ENCODE measurements at regions of chr1 and their contacts with region 1.

Region 1: DNA sequence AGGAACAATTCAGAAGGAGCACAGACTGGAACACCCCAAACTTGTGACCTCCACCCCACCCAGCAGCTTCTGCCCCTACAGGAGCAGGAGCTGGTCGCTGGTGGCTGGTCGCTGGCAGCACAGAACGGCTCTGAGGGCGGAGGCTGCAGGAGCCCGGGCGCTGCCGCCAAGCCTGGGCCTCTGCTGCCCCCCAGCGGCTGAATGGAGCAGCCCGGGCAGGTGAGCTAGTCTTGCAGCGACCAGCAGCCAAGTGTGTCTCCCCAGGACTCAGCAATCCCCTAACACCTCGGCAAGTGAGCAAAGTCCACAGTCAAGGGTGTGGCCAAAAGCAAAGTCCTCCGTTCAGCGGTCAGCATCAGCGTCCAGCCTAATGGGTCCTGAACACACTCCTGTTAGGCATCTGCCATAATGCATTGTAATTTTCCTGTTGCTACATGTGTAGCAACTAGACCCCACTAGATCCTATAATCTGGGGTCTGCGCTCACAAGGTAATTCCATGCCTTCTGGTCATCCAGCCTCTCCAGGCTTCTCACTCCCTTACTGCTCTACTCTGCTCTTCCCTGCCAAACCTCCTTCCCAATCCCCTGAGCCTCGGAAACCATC is 12.1 kb upstream of the GJB5 start:
- DNase-seq: peak; percentile 91
- ATAC-seq: peak; percentile 98
- H3K4me3 Mint-ChIP-seq: no peak overlapping the region
- H3K27ac Mint-ChIP-seq: no peak overlapping the region
- H3K4me1 Mint-ChIP-seq: no peaks in the 10 kb centered on the region
- H3K27me3 Mint-ChIP-seq: no peaks in the 10 kb centered on the region

Region 2: GRCh38 chr1:34549199-34549598 is 193.6 kb before region 1 on chr1:
- CTCF ChIA-PET with region 1: interaction called, 4 read pairs
- POLR2A ChIA-PET with region 1: no interaction called
- intact Hi-C with region 1: loop called in 1 of 2 experiments (anchors 5 kb)
- DNase-seq: peak; percentile 32
- ATAC-seq: no peak
- H3K4me3 Mint-ChIP-seq: no peak overlapping the region
- H3K27ac Mint-ChIP-seq: no peak overlapping the region
- H3K4me1 Mint-ChIP-seq: no peaks in the 10 kb centered on the region
- H3K27me3 Mint-ChIP-seq: peaks cover 11% of the 10 kb centered on the region

Region 3: GRCh38 chr1:34681480-34682451 is 61.0 kb before region 1 on chr1:
- CTCF ChIA-PET with region 1: interaction called, 4 read pairs
- POLR2A ChIA-PET with region 1: no interaction called
- intact Hi-C with region 1: loop called in 1 of 2 experiments (anchors 1 kb)
- DNase-seq: peak; percentile 69
- ATAC-seq: peak; percentile 69
- H3K4me3 Mint-ChIP-seq: no peak overlapping the region
- H3K27ac Mint-ChIP-seq: no peak overlapping the region
- H3K4me1 Mint-ChIP-seq: peaks cover 6% of the 10 kb centered on the region
- H3K27me3 Mint-ChIP-seq: peaks cover 13% of the 10 kb centered on the region

Region 4: GRCh38 chr1:34829250-34829649 is 86.5 kb after region 1 on chr1:
- CTCF ChIA-PET with region 1: no interaction called
- POLR2A ChIA-PET with region 1: no interaction called
- intact Hi-C with region 1: no loop called
- DNase-seq: no peak
- ATAC-seq: no peak
- H3K4me3 Mint-ChIP-seq: no peak overlapping the region
- H3K27ac Mint-ChIP-seq: no peak overlapping the region
- H3K4me1 Mint-ChIP-seq: no peaks in the 10 kb centered on the region
- H3K27me3 Mint-ChIP-seq: no peaks in the 10 kb centered on the region

Region 5: GRCh38 chr1:34885405-34886247 is 142.9 kb after region 1 on chr1:
- CTCF ChIA-PET with region 1: no interaction called
- POLR2A ChIA-PET with region 1: no interaction called
- intact Hi-C with region 1: no loop called
- DNase-seq: peak; percentile 80
- ATAC-seq: peak; percentile 94
- H3K4me3 Mint-ChIP-seq: peak overlapping the region; percentile 50
- H3K27ac Mint-ChIP-seq: no peak overlapping the region
- H3K4me1 Mint-ChIP-seq: peaks cover 3% of the 10 kb centered on the region
- H3K27me3 Mint-ChIP-seq: peaks cover 26% of the 10 kb centered on the region

Region 6: GRCh38 chr1:34911465-34911864 is 168.7 kb after region 1 on chr1:
- CTCF ChIA-PET with region 1: no interaction called
- POLR2A ChIA-PET with region 1: no interaction called
- intact Hi-C with region 1: no loop called
- DNase-seq: no peak
- ATAC-seq: no peak
- H3K4me3 Mint-ChIP-seq: no peak overlapping the region
- H3K27ac Mint-ChIP-seq: no peak overlapping the region
- H3K4me1 Mint-ChIP-seq: no peaks in the 10 kb centered on the region
- H3K27me3 Mint-ChIP-seq: peaks cover 19% of the 10 kb centered on the region